Calu3 (cell line): ENCODE measurements at regions of chr5 and their contacts with region 1.

Region 1: DNA sequence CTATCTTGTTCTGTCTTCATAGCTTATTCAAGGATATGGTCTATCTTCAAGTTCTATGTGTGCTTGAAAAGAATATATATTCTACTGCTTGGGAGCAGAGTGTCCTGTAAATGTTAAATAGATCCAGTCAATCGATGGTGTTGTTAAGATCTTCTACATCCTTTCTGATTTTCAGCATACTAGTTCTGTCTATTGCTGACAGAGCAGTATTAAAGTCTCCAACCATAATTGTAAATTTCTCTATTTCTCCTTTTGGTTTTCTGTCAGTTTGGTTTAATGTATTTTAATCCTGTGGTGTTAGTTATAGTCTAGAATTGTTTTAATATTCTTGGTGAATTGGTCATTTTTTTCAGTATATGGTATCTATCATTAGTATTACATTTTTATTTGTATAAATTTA is 124.0 kb upstream of the COX7C start:
- DNase-seq: no peak
- H3K4me3 Mint-ChIP-seq: no peak overlapping the region
- H3K27ac Mint-ChIP-seq: no peak overlapping the region
- H3K4me1 Mint-ChIP-seq: peaks cover 3% of the 10 kb centered on the region
- H3K27me3 Mint-ChIP-seq: no peaks in the 10 kb centered on the region
- CTCF ChIP-seq: no peak

Region 2: GRCh38 chr5:86404256-86404655 is 89.5 kb before region 1 on chr5:
- CTCF ChIA-PET with region 1: no interaction called
- intact Hi-C with region 1: loop called (anchors 10 kb)
- DNase-seq: no peak
- H3K4me3 Mint-ChIP-seq: no peak overlapping the region
- H3K27ac Mint-ChIP-seq: no peak overlapping the region
- H3K4me1 Mint-ChIP-seq: no peaks in the 10 kb centered on the region
- H3K27me3 Mint-ChIP-seq: no peaks in the 10 kb centered on the region
- CTCF ChIP-seq: no peak